ENCODE measurements at regions of chr9 and their contacts with region 1.

Region 1: GRCh38 chr9:6008169-6008979 is 7.0 kb downstream of the RANBP6 start:
- DNase-seq: peak; percentile 89 to 99 (median 93)
- ATAC-seq: peak; percentile 72
- H3K4me3 ChIP-seq: peak overlapping the region; percentile 75 to 77
- H3K4me3 Mint-ChIP-seq: peak overlapping the region; percentile 85
- H3K27ac ChIP-seq: peak overlapping the region; percentile 82 to 94
- H3K27ac Mint-ChIP-seq: peak overlapping the region; percentile 89
- H3K4me1 ChIP-seq: peaks cover 32% of the 10 kb centered on the region
- H3K4me1 Mint-ChIP-seq: peaks cover 54% of the 10 kb centered on the region
- H3K27me3 ChIP-seq: no peaks in the 10 kb centered on the region
- H3K27me3 Mint-ChIP-seq: no peaks in the 10 kb centered on the region
- CTCF ChIP-seq: no peak

Region 2: GRCh38 chr9:5450359-5451091 is 557.8 kb before region 1 on chr9 and contains the start of gene CD274:
- CTCF ChIA-PET with region 1: no interaction called
- POLR2A ChIA-PET with region 1: no interaction called
- intact Hi-C with region 1: loop called (anchors 5 to 10 kb)
- DNase-seq: peak; percentile 53 to 92 (median 74)
- ATAC-seq: peak; percentile 93
- H3K4me3 ChIP-seq: peak within 1 kb of the TSS; percentile 60 to 91
- H3K4me3 Mint-ChIP-seq: peak within 1 kb of the TSS; percentile 88
- H3K27ac ChIP-seq: peak within 1 kb of the TSS; percentile 94 to 96
- H3K27ac Mint-ChIP-seq: peak within 1 kb of the TSS; percentile 95
- H3K4me1 ChIP-seq: peaks cover 17% of the 10 kb centered on the region
- H3K4me1 Mint-ChIP-seq: peaks cover 51% of the 10 kb centered on the region
- H3K27me3 ChIP-seq: no peaks in the 10 kb centered on the region
- H3K27me3 Mint-ChIP-seq: no peaks in the 10 kb centered on the region
- CTCF ChIP-seq: peak; percentile 55
- total RNA-seq, gene CD274: 3.4 to 3.7 TPM

Region 3: DNA sequence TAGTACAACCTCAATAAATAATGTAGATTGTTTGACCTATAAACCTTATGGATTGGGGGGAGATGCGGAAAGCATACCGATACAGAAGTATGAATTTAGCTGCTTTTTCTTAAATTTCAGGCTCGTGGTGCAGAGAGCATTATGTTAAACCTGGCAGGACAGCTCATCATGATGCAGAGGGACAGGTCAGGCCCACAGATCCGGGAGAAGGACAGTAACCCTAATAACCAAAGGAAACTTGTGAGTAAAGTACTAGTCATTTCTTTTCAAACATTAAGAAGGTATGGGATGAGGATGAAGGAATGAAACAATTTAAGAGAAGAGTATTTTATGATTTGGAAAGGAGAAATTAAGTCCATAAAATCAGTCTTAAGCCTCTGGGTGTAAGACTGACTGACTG is 246.0 kb before region 1 on chr9:
- CTCF ChIA-PET with region 1: no interaction called
- POLR2A ChIA-PET with region 1: no interaction called
- intact Hi-C with region 1: no loop called
- DNase-seq: no peak
- ATAC-seq: no peak
- H3K4me3 ChIP-seq: no peak overlapping the region
- H3K4me3 Mint-ChIP-seq: no peak overlapping the region
- H3K27ac ChIP-seq: no peak overlapping the region
- H3K27ac Mint-ChIP-seq: no peak overlapping the region
- H3K4me1 ChIP-seq: no peaks in the 10 kb centered on the region
- H3K4me1 Mint-ChIP-seq: peaks cover 9% of the 10 kb centered on the region
- H3K27me3 ChIP-seq: no peaks in the 10 kb centered on the region
- H3K27me3 Mint-ChIP-seq: no peaks in the 10 kb centered on the region
- CTCF ChIP-seq: no peak

Region 4: GRCh38 chr9:5971740-5972139 is 36.6 kb before region 1 on chr9:
- CTCF ChIA-PET with region 1: no interaction called
- POLR2A ChIA-PET with region 1: no interaction called
- intact Hi-C with region 1: loop called in 1 of 2 experiments (anchors 5 kb)
- DNase-seq: no peak
- ATAC-seq: no peak
- H3K4me3 ChIP-seq: no peak overlapping the region
- H3K4me3 Mint-ChIP-seq: no peak overlapping the region
- H3K27ac ChIP-seq: no peak overlapping the region
- H3K27ac Mint-ChIP-seq: no peak overlapping the region
- H3K4me1 ChIP-seq: no peaks in the 10 kb centered on the region
- H3K4me1 Mint-ChIP-seq: peaks cover 29% of the 10 kb centered on the region
- H3K27me3 ChIP-seq: no peaks in the 10 kb centered on the region
- H3K27me3 Mint-ChIP-seq: no peaks in the 10 kb centered on the region
- CTCF ChIP-seq: no peak

Region 5: DNA sequence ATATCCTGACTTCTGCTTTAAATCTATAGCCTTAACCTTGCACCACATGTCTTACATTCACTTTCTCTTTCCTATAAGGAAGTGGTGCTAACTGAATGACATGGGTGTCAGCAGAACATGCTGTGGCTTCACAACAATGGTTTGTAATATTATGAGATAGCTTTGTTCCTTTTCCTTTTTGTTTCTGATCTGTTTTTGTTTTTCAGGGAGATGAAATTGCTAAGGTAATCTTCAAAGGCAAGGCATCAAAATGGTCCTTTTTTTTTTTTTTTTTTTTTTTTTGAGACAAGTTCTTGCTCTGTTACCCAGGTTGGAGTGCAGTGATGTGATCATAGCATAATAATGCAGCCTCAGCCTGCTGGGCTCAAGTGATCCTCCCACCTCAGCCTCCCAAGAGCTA is 60.6 kb after region 1 on chr9:
- CTCF ChIA-PET with region 1: no interaction called
- POLR2A ChIA-PET with region 1: interaction called, 4 read pairs
- intact Hi-C with region 1: loop called in 1 of 2 experiments (anchors 2 kb)
- DNase-seq: peak in 3 of 9 experiments; percentile 30 to 86 (median 69)
- ATAC-seq: peak; percentile 96
- H3K4me3 ChIP-seq: peak overlapping the region in 1 of 2 experiments; percentile 9
- H3K4me3 Mint-ChIP-seq: peak overlapping the region; percentile 71
- H3K27ac ChIP-seq: peak overlapping the region; percentile 25 to 74
- H3K27ac Mint-ChIP-seq: peak overlapping the region; percentile 86
- H3K4me1 ChIP-seq: peaks cover 16% of the 10 kb centered on the region
- H3K4me1 Mint-ChIP-seq: peaks cover 18% of the 10 kb centered on the region
- H3K27me3 ChIP-seq: no peaks in the 10 kb centered on the region
- H3K27me3 Mint-ChIP-seq: no peaks in the 10 kb centered on the region
- CTCF ChIP-seq: no peak

Region 6: GRCh38 chr9:6412487-6413364 is 404.4 kb after region 1 on chr9 and contains the start of gene UHRF2:
- CTCF ChIA-PET with region 1: no interaction called
- POLR2A ChIA-PET with region 1: interaction called, 22 read pairs
- intact Hi-C with region 1: loop called (anchors 1 to 5 kb)
- DNase-seq: peak; percentile 98 to 99 (median 99)
- ATAC-seq: peak; percentile 88
- H3K4me3 ChIP-seq: peak within 1 kb of the TSS; percentile 58 to 74
- H3K4me3 Mint-ChIP-seq: peak within 1 kb of the TSS; percentile 87
- H3K27ac ChIP-seq: peak within 1 kb of the TSS; percentile 80 to 83
- H3K27ac Mint-ChIP-seq: peak within 1 kb of the TSS; percentile 93
- H3K4me1 ChIP-seq: peaks cover 28% of the 10 kb centered on the region
- H3K4me1 Mint-ChIP-seq: peaks cover 34% of the 10 kb centered on the region
- H3K27me3 ChIP-seq: no peaks in the 10 kb centered on the region
- H3K27me3 Mint-ChIP-seq: no peaks in the 10 kb centered on the region
- CTCF ChIP-seq: no peak
- total RNA-seq, gene UHRF2: 140 to 159 TPM

Region 7: GRCh38 chr9:6449645-6450044 is 441.3 kb after region 1 on chr9:
- CTCF ChIA-PET with region 1: no interaction called
- POLR2A ChIA-PET with region 1: no interaction called
- intact Hi-C with region 1: no loop called
- DNase-seq: no peak
- ATAC-seq: no peak
- H3K4me3 ChIP-seq: no peak overlapping the region
- H3K4me3 Mint-ChIP-seq: no peak overlapping the region
- H3K27ac ChIP-seq: no peak overlapping the region
- H3K27ac Mint-ChIP-seq: peak overlapping the region; percentile 14
- H3K4me1 ChIP-seq: peaks cover 20% of the 10 kb centered on the region
- H3K4me1 Mint-ChIP-seq: peaks cover 64% of the 10 kb centered on the region
- H3K27me3 ChIP-seq: no peaks in the 10 kb centered on the region
- H3K27me3 Mint-ChIP-seq: no peaks in the 10 kb centered on the region
- CTCF ChIP-seq: no peak

Region 8: GRCh38 chr9:6525326-6526045 is 517.1 kb after region 1 on chr9:
- CTCF ChIA-PET with region 1: no interaction called
- POLR2A ChIA-PET with region 1: no interaction called
- intact Hi-C with region 1: no loop called
- DNase-seq: no peak
- ATAC-seq: no peak
- H3K4me3 ChIP-seq: no peak overlapping the region
- H3K4me3 Mint-ChIP-seq: no peak overlapping the region
- H3K27ac ChIP-seq: no peak overlapping the region
- H3K27ac Mint-ChIP-seq: no peak overlapping the region
- H3K4me1 ChIP-seq: no peaks in the 10 kb centered on the region
- H3K4me1 Mint-ChIP-seq: no peaks in the 10 kb centered on the region
- H3K27me3 ChIP-seq: no peaks in the 10 kb centered on the region
- H3K27me3 Mint-ChIP-seq: no peaks in the 10 kb centered on the region
- CTCF ChIP-seq: no peak

Region 9: DNA sequence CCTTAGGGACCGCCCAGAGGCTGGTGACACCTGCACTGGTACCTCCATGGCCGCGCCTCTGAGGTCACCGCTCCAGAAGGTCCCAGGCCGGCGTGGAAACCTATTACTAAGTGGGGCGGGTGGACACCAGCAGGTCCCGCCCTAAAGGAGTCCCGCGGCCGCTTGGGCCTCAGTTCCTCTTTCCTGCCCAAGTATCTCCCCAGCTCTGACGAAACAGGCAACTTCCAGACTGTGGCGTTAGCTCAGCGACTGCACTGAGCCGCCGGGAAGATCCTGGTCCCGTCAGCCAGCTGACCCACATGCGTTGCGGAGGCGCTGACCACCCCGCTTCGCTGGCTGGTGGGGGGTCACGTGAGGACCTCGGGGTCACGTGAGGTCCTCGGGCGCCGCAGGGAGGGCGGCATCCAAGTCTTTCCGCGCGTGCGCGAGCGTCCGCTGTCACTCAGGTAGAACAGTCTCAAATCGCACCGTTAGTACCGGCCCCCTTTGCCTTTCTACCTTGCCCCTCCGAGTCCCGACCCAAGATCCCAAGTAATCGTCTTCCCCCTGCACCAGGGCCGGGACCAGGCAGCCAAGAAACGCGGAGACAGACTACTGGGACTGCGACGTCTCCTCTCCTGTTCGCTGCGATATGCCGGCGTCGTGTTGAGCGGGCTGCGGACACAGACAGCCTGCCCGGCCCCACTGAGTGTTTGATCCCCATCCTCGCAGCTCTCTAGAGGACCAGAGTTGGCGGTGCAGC is 695.7 kb after region 1 on chr9:
- CTCF ChIA-PET with region 1: no interaction called
- POLR2A ChIA-PET with region 1: no interaction called
- intact Hi-C with region 1: loop called (anchors 5 to 10 kb)
- DNase-seq: peak; percentile 61 to 94 (median 86)
- ATAC-seq: peak; percentile 82
- H3K4me3 ChIP-seq: peak overlapping the region; percentile 80 to 99
- H3K4me3 Mint-ChIP-seq: peak overlapping the region; percentile 100
- H3K27ac ChIP-seq: peak overlapping the region; percentile 94 to 96
- H3K27ac Mint-ChIP-seq: peak overlapping the region; percentile 100
- H3K4me1 ChIP-seq: peaks cover 10% of the 10 kb centered on the region
- H3K4me1 Mint-ChIP-seq: peaks cover 13% of the 10 kb centered on the region
- H3K27me3 ChIP-seq: no peaks in the 10 kb centered on the region
- H3K27me3 Mint-ChIP-seq: no peaks in the 10 kb centered on the region
- CTCF ChIP-seq: no peak

Measured in CD8-positive, alpha-beta T cell (primary cell).